Prostate gland (tissue), 2 donors: ENCODE measurements at regions of chr22 and their contacts with region 1.

Region 1: DNA sequence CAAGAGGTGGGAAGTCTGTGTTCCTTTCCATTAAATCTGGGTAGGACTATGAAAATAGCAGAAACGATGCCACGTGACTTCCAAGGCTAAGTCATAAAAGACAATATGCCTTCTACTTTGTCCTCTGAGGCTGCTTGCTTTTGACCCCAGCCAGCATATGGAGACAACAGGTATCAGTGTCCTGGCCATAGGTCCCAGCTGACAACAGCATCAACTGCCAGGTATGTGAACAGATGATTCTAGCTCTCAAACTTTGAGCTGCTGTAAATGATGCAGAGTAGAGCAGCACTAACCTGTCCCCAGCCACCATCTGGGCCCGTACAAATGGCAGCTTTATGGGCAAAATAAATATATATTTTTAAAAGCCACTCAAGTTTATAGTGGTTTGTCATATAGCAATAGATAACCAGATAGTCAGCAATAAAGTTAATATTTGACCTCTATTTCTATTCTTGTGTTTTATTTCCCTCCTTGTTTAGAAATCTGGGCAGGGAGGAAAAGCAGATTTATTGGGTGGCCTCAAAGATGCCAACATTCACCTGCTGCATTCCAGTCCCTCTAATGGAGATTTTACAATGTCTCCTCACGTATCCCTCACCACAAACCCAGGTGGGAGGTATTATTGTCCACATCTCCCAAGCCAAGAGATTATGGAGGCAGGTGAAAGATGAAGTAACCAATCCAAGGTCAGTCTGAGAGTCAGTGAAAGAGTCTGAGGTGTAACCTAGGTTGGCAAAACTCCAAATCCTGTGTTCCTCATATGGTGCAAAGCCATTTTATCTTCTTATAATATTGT is 209.6 kb upstream of the LARGE1 start:
- DNase-seq: no peak
- H3K4me3 ChIP-seq: no peak overlapping the region
- H3K27ac ChIP-seq: no peak overlapping the region
- H3K4me1 ChIP-seq: no peaks in the 10 kb centered on the region
- H3K27me3 ChIP-seq: no peaks in the 10 kb centered on the region
- CTCF ChIP-seq: no peak
- POLR2A ChIP-seq: no peak

Region 2: GRCh38 chr22:34001701-34002466 is 128.0 kb before region 1 on chr22:
- intact Hi-C with region 1: no loop called
- DNase-seq: no peak
- H3K4me3 ChIP-seq: no peak overlapping the region
- H3K27ac ChIP-seq: no peak overlapping the region
- H3K4me1 ChIP-seq: no peaks in the 10 kb centered on the region
- H3K27me3 ChIP-seq: no peaks in the 10 kb centered on the region
- CTCF ChIP-seq: no peak
- POLR2A ChIP-seq: no peak

Region 3: DNA sequence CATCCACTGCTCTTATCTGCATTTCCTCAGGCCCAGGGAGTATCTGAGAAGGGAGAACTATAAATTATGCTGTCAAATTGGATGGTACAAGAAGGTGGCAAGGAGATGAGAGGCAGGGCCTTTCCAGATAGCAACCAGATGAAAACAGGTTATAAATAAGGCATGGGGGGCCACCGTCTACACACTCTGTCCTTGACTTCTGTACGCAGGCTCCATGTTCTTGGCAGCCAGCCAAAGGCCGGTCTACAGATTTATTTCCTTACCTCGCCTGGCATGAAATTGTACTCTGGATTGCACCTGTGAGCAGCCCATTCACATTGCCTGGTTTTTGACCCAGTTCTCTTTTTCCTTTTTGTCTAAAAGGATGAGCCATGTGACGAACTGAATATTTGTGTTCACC is 52.5 kb before region 1 on chr22:
- intact Hi-C with region 1: loop called (anchors 2 kb)
- DNase-seq: no peak
- H3K4me3 ChIP-seq: no peak overlapping the region
- H3K27ac ChIP-seq: no peak overlapping the region
- H3K4me1 ChIP-seq: no peaks in the 10 kb centered on the region
- H3K27me3 ChIP-seq: no peaks in the 10 kb centered on the region
- CTCF ChIP-seq: no peak
- POLR2A ChIP-seq: no peak